Mammary epithelial cell (primary cell): ENCODE measurements at regions of chr6 and their contacts with region 1.

Region 1: DNA sequence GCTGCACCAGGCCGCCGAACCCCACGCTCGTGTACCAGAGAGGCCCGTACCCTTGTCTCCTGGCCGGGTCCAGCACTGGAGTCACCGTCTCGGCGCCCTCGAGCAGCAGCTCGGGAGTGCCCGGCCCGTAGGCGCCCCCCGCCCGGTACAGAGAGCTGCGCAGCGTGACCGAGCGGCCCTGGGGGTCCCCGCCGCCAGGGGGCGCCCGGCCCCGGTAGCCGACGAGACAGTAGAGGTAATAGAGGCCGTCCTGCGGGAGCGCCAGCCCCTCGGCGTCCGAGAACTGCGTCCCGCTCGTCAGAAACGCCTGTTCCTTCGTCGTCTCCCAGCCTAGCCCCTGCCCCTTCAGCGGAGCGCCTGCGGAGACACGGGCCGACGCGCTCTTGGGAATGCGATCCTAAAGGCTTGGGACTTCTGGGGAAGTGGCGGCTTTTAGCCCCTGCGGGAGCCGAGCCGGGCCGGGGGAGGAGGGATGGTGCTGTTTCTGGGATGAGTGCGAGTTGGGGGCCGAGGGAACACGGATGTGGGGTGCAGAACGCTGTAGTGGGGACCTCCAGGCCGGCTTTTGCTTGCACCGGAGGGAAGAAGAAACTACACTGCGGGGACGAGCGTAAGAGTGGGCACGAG is 1.3 kb downstream of the LTB start:
- DNase-seq: peak; percentile 66
- H3K4me3 ChIP-seq: peak overlapping the region; percentile 72 to 92 (median 85)
- H3K27ac ChIP-seq: peak overlapping the region; percentile 61
- H3K4me1 ChIP-seq: peaks cover 21% of the 10 kb centered on the region
- H3K27me3 ChIP-seq: no peaks in the 10 kb centered on the region
- CTCF ChIP-seq: peak; percentile 75 to 96

Region 2: DNA sequence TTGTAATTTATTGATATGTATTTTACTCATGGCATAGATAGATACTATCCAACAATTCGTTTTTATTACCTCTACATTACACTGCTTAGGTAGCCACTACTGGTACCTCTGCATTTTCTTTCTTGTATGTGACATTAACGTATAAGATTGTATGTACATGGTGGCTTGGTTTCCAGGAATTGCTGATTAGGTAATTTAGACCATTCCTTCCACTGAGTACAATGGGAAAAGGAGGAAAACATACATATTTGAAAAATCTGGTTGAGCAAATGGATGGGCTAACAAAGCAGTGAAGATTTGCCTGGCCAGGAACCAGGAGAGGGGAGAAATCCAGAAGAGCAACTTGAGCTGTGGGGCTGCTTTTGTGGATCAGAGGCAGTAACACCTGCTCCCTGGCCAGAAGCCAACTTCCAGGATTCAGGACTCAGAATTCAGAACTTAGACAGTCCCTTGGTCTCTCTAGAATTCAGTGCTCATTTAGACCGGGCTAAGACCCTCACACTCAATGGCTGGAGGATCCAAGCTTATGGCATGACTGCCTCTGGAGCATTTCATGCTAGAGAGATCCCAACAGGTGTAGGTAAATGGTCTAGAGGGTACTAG is 100.9 kb before region 1 on chr6:
- CTCF ChIA-PET with region 1: no interaction called
- dilution Hi-C with region 1: loop called (anchors 5 kb)
- in situ Hi-C with region 1: no loop called
- intact Hi-C with region 1: no loop called
- DNase-seq: no peak
- H3K4me3 ChIP-seq: no peak overlapping the region
- H3K27ac ChIP-seq: no peak overlapping the region
- H3K4me1 ChIP-seq: no peaks in the 10 kb centered on the region
- H3K27me3 ChIP-seq: no peaks in the 10 kb centered on the region
- CTCF ChIP-seq: no peak

Region 3: DNA sequence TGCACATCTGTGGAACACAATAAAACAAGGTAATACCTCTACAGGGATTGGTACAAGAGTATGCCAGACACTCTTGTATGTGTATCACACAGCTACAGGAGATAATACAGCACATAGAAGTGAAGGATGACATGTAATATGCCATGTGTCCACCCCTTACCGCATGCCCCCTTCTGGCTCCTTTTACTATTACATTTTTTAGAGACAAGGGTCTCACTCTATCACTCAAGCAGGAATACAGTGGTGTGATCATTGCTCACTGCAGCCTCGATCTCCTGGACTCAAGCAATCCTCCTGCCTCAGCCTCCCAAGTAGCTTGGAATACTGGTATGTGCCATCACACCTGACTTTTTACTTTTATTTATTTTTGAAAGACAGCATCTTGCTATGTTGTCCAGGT is 16.1 kb after region 1 on chr6:
- CTCF ChIA-PET with region 1: interaction called, 3 read pairs
- dilution Hi-C with region 1: no loop called
- in situ Hi-C with region 1: no loop called
- intact Hi-C with region 1: loop called (anchors 1 kb)
- DNase-seq: no peak
- H3K4me3 ChIP-seq: no peak overlapping the region
- H3K27ac ChIP-seq: no peak overlapping the region
- H3K4me1 ChIP-seq: no peaks in the 10 kb centered on the region
- H3K27me3 ChIP-seq: no peaks in the 10 kb centered on the region
- CTCF ChIP-seq: peak; percentile 26 to 27

Region 4: GRCh38 chr6:31619805-31620585 is 39.1 kb after region 1 on chr6:
- CTCF ChIA-PET with region 1: no interaction called
- dilution Hi-C with region 1: loop called (anchors 5 kb)
- in situ Hi-C with region 1: no loop called
- intact Hi-C with region 1: no loop called
- DNase-seq: peak; percentile 99
- H3K4me3 ChIP-seq: peak overlapping the region; percentile 55 to 88 (median 77)
- H3K27ac ChIP-seq: peak overlapping the region; percentile 96
- H3K4me1 ChIP-seq: peaks cover 16% of the 10 kb centered on the region
- H3K27me3 ChIP-seq: no peaks in the 10 kb centered on the region
- CTCF ChIP-seq: no peak